Activated T-helper 1 cell treated with anti-CD3 and anti-CD28 coated beads, Interleukin-12 subunit alpha, Interleukin-12 subunit beta, Interleukin-2, Interleukin-4 antibody, amounts not matched to agents 30 ng/mL and 10 ng/mL and 1 ng/mL, durations not matched to agents 14 hours and 24 hours and 36 hours (primary cell): ENCODE measurements at regions of chr18 and their contacts with region 1.

Region 1: DNA sequence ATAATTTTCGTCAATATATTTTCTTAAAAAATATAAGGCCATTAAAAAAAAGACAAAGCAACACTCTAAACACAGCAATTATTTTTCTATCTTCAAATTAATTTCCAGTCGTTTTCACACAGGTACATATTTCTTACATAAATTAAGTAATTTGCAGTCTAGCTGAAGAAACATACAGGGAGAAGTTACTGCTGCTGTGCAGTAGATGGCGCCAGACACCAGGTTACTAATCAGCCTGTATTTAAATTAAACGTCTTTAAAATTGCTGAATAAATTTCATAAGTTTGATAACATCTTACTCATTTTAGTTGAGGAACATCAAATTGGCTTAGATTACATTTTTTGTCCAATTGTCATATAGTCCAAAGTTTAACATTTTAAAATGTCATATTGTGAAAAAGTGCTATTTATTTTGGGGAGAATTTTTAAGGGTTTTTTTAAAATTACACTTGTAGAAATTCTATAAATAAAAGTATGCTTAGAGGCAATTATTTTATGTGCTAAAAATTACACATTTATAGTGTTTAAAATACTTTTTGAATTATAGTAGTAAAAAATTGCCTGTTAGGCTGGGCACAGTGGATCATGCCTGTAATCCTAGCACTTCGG is 88.4 kb downstream of the PMAIP1 start:
- DNase-seq: no peak
- H3K4me3 Mint-ChIP-seq: no peak overlapping the region
- H3K27ac Mint-ChIP-seq: no peak overlapping the region
- H3K4me1 Mint-ChIP-seq: no peaks in the 10 kb centered on the region
- H3K27me3 Mint-ChIP-seq: peaks cover 26% of the 10 kb centered on the region

Region 2: GRCh38 chr18:59593291-59593717 is 394.9 kb before region 1 on chr18:
- intact Hi-C with region 1: no loop called
- DNase-seq: no peak
- H3K4me3 Mint-ChIP-seq: no peak overlapping the region
- H3K27ac Mint-ChIP-seq: no peak overlapping the region
- H3K4me1 Mint-ChIP-seq: no peaks in the 10 kb centered on the region
- H3K27me3 Mint-ChIP-seq: no peaks in the 10 kb centered on the region

Region 3: DNA sequence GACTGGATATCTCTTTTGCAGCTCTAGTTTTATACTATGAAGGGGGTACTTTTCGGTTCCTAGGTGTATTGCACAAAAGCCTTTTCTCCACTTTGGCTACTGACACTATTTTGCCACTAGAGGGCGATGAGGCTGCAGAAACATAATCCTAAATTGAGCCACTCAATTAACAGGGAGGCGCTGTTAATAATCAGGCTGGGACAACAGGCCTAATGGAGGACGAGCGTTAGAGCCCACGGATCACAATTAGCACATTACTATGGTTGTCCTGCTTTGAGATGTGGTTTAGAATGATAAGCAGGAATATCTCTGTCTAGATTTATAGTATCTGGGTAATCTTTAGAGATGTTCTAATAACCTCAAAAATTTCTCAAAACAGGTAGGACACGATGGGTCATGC is 150.6 kb before region 1 on chr18:
- intact Hi-C with region 1: loop called (anchors 1 kb)
- DNase-seq: peak; percentile 34
- H3K4me3 Mint-ChIP-seq: no peak overlapping the region
- H3K27ac Mint-ChIP-seq: no peak overlapping the region
- H3K4me1 Mint-ChIP-seq: peaks cover 20% of the 10 kb centered on the region
- H3K27me3 Mint-ChIP-seq: peaks cover 14% of the 10 kb centered on the region

Region 4: DNA sequence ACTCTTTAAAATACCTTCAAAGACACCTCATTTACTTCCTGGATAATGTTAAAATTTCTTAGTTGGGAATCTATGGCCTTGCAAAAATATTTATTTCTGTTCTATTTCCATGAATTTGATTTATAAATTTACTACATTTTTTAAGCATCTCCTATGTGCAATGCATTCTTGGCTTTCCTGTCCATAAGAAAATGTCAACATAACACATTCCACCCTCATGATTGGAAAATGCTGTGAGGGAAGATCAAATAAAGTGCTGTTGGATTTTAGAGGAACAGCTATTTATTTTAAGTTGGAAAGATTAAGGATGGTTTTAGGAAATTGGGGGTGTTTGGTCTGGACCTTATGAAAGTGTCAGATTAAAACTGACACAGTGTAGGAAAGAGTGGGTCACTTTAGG is 429.7 kb after region 1 on chr18:
- intact Hi-C with region 1: loop called (anchors 5 kb)
- DNase-seq: no peak
- H3K4me3 Mint-ChIP-seq: no peak overlapping the region
- H3K27ac Mint-ChIP-seq: no peak overlapping the region
- H3K4me1 Mint-ChIP-seq: no peaks in the 10 kb centered on the region
- H3K27me3 Mint-ChIP-seq: no peaks in the 10 kb centered on the region

Region 5: DNA sequence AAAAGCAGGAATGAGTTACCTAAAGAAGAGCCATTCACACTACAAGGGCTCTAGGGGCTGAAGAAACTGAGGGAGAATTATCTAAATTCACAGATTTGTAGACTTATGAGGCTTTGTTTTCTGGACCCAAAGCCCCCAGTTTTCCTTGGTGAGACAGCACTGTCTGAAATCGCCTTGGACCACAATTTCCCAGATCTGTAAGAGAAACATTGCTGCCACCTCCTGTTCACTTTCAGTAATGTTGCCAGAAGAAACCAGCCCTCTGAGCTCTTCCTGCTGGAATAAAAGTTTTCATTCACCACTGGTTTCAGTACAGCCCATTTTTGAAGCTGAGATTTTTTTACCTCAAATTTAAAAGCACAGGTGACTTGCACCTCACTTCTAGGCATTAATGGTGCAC is 1514.3 kb after region 1 on chr18:
- intact Hi-C with region 1: loop called (anchors 5 kb)
- DNase-seq: no peak
- H3K4me3 Mint-ChIP-seq: no peak overlapping the region
- H3K27ac Mint-ChIP-seq: no peak overlapping the region
- H3K4me1 Mint-ChIP-seq: no peaks in the 10 kb centered on the region
- H3K27me3 Mint-ChIP-seq: peaks cover 8% of the 10 kb centered on the region